Prostate gland (tissue), 2 donors: ENCODE measurements at regions of chr4 and their contacts with region 1.

Region 1: GRCh38 chr4:85084380-85085094 is 118.0 kb upstream of the WDFY3 start:
- DNase-seq: peak; percentile 45
- H3K4me3 ChIP-seq: no peak overlapping the region
- H3K27ac ChIP-seq: no peak overlapping the region
- H3K4me1 ChIP-seq: no peaks in the 10 kb centered on the region
- H3K27me3 ChIP-seq: no peaks in the 10 kb centered on the region
- CTCF ChIP-seq: peak; percentile 20 to 64 (median 54)
- POLR2A ChIP-seq: no peak

Region 2: DNA sequence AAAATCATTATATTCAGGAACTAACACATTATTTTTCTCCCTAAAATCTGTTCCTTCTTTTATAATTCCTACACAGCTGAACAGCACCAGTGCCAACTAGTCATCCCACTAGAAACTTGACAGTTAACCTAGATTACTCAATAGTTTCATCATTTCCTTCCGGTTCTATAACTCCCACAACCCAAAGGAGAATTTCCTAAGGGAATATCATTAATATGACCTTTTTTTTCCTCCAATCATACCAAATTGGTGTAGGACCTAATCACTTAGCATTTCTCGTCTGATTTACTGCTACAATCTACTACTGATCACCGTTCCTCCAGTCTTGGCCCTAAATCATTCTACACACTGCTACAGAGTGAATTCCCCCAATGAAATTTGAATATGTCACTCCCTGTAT is 163.9 kb before region 1 on chr4:
- intact Hi-C with region 1: no loop called
- DNase-seq: no peak
- H3K4me3 ChIP-seq: no peak overlapping the region
- H3K27ac ChIP-seq: no peak overlapping the region
- H3K4me1 ChIP-seq: peaks cover 8% of the 10 kb centered on the region
- H3K27me3 ChIP-seq: no peaks in the 10 kb centered on the region
- CTCF ChIP-seq: no peak
- POLR2A ChIP-seq: no peak

Region 3: GRCh38 chr4:85200106-85200505 is 115.6 kb after region 1 on chr4:
- intact Hi-C with region 1: no loop called
- DNase-seq: no peak
- H3K4me3 ChIP-seq: no peak overlapping the region
- H3K27ac ChIP-seq: no peak overlapping the region
- H3K4me1 ChIP-seq: no peaks in the 10 kb centered on the region
- H3K27me3 ChIP-seq: no peaks in the 10 kb centered on the region
- CTCF ChIP-seq: no peak
- POLR2A ChIP-seq: no peak

Region 4: DNA sequence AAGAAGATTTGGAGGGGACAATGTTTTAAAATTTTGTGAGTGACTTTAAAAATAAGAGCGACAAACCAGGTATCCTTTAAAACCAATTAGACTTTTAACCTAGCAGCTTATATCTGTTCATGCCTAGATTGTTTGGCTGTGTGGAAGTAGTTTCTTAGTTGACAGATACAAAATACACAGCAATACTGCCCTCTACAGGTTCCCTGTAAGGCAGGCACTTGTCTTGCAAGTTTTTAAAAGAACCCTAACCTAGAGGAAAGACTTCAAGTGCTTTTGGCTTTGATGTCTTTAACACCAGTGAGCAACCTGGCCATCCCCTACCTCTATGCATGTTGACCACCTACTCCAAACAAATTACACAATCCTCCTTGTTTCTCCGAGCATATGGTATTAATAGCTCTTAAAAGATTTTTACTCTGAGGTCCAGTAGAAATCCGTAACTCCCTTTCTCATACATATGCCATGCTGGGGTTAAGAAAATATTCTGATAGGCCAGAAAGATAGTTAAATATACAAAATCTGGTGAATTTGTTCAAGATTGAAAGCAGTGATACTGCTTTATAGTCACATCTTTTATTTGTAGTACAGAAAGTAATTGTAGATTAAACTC is 663.5 kb after region 1 on chr4:
- intact Hi-C with region 1: loop called (anchors 10 kb)
- DNase-seq: peak; percentile 58
- H3K4me3 ChIP-seq: no peak overlapping the region
- H3K27ac ChIP-seq: no peak overlapping the region
- H3K4me1 ChIP-seq: no peaks in the 10 kb centered on the region
- H3K27me3 ChIP-seq: no peaks in the 10 kb centered on the region
- CTCF ChIP-seq: peak; percentile 53 to 84 (median 78)
- POLR2A ChIP-seq: no peak

Region 5: DNA sequence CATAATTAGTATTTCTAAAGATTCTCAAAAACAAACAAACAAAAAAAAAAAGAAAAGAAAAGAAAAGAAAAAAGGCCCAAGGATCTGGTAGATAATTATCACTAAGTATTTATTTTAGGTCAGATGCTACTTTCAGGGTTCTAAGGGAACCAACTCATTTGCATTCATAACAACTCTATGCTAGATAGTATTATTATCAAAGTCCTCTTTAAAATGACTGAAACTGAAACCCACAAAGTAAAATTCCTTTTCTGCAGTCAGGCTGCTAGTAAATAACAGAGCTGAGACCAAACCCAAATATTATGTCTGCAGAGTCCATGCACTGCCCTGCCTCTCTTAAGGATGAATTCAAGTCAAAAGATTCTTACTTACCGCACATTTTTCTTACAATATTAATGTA is 1313.7 kb after region 1 on chr4:
- intact Hi-C with region 1: no loop called
- DNase-seq: no peak
- H3K4me3 ChIP-seq: no peak overlapping the region
- H3K27ac ChIP-seq: no peak overlapping the region
- H3K4me1 ChIP-seq: no peaks in the 10 kb centered on the region
- H3K27me3 ChIP-seq: no peaks in the 10 kb centered on the region
- CTCF ChIP-seq: no peak
- POLR2A ChIP-seq: no peak